CD4-positive, alpha-beta T cell (primary cell): ENCODE measurements at regions of chr13 and their contacts with region 1.

Region 1: DNA sequence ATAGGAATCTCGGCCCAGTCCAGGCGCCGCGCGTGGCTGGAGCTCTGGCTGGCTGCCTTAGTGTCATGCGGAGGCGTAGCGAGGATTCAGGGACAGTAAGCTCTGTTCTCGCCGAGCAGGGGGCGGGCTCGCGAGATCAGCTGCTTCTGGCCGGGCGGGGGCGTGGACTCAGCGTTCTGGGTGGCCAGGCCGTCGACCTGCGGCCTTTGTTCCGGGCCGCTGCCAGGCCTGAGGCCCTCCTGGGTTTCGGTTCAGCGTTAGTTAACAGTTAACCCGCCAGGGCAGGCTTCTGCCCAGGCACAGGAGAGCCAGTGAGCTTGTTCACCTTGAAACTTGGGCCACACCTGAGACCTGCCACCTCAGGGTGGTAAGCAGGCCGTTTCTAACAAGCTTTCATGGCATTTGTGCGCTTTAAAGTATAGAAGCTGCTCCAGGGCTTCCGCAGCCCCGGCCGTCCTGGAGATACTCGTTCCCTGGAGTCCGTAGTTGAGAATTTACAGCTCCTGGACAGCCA is 332.2 kb upstream of the SGCG start:
- DNase-seq: no peak
- ATAC-seq: no peak
- H3K4me3 ChIP-seq: no peak overlapping the region
- H3K4me3 Mint-ChIP-seq: no peak overlapping the region
- H3K27ac ChIP-seq: no peak overlapping the region
- H3K27ac Mint-ChIP-seq: no peak overlapping the region
- H3K4me1 ChIP-seq: no peaks in the 10 kb centered on the region
- H3K4me1 Mint-ChIP-seq: no peaks in the 10 kb centered on the region
- H3K27me3 ChIP-seq: no peaks in the 10 kb centered on the region
- H3K27me3 Mint-ChIP-seq: no peaks in the 10 kb centered on the region
- CTCF ChIP-seq: no peak

Region 2: GRCh38 chr13:22828081-22828480 is 20.5 kb before region 1 on chr13:
- CTCF ChIA-PET with region 1: no interaction called
- POLR2A ChIA-PET with region 1: no interaction called
- intact Hi-C with region 1: loop called (anchors 1 kb)
- DNase-seq: no peak
- ATAC-seq: no peak
- H3K4me3 ChIP-seq: no peak overlapping the region
- H3K4me3 Mint-ChIP-seq: no peak overlapping the region
- H3K27ac ChIP-seq: no peak overlapping the region
- H3K27ac Mint-ChIP-seq: no peak overlapping the region
- H3K4me1 ChIP-seq: no peaks in the 10 kb centered on the region
- H3K4me1 Mint-ChIP-seq: no peaks in the 10 kb centered on the region
- H3K27me3 ChIP-seq: no peaks in the 10 kb centered on the region
- H3K27me3 Mint-ChIP-seq: no peaks in the 10 kb centered on the region
- CTCF ChIP-seq: no peak